Naive thymus-derived CD8-positive, alpha-beta T cell (primary cell): ENCODE measurements at regions of chr17 and their contacts with region 1.

Region 1: GRCh38 chr17:76014184-76014924 is 12.8 kb downstream of the EVPL start:
- DNase-seq: peak; percentile 67 to 88 (median 79)
- ATAC-seq: peak; percentile 99 to 100
- H3K4me3 Mint-ChIP-seq: peak overlapping the region in 9 of 10 donors; percentile 33 to 80 (median 57)
- H3K27ac Mint-ChIP-seq: peak overlapping the region; percentile 48 to 94 (median 76)
- H3K4me1 Mint-ChIP-seq: peaks cover 5 to 22% (median 18%) of the 10 kb centered on the region in 4 donors
- H3K27me3 Mint-ChIP-seq: no peaks in the 10 kb centered on the region

Region 2: GRCh38 chr17:76027159-76027839 is 12.9 kb after region 1 on chr17 and contains the start of gene EVPL:
- POLR2A ChIA-PET with region 1: interaction called, 61 read pairs
- DNase-seq: no peak
- ATAC-seq: no peak
- H3K4me3 Mint-ChIP-seq: peak within 1 kb of the TSS in 3 of 10 donors; percentile 50 to 93 (median 83)
- H3K27ac Mint-ChIP-seq: peak within 1 kb of the TSS; percentile 69 to 100 (median 100)
- H3K4me1 Mint-ChIP-seq: peaks cover 20 to 69% (median 43%) of the 10 kb centered on the region in 4 donors
- H3K27me3 Mint-ChIP-seq: no peaks in the 10 kb centered on the region
- polyA plus RNA-seq, gene EVPL: 0.74 to 1.6 TPM in 2 of 3 donors, not detected in the other

Region 3: GRCh38 chr17:76056835-76057234 is 42.5 kb after region 1 on chr17:
- POLR2A ChIA-PET with region 1: interaction called, 10 read pairs
- DNase-seq: peak in 1 of 10 donors; percentile 42
- ATAC-seq: peak; percentile 63 to 70
- H3K4me3 Mint-ChIP-seq: no peak overlapping the region
- H3K27ac Mint-ChIP-seq: peak overlapping the region in 1 of 10 donors; percentile 77
- H3K4me1 Mint-ChIP-seq: peaks cover 0 to 11% (median 4%) of the 10 kb centered on the region in 4 donors
- H3K27me3 Mint-ChIP-seq: no peaks in the 10 kb centered on the region

Region 4: GRCh38 chr17:76079956-76080767 is 65.8 kb after region 1 on chr17:
- POLR2A ChIA-PET with region 1: interaction called, 13 read pairs
- DNase-seq: no peak
- ATAC-seq: peak; percentile 17 to 24
- H3K4me3 Mint-ChIP-seq: peak overlapping the region in 2 of 10 donors; percentile 19 to 40
- H3K27ac Mint-ChIP-seq: peak overlapping the region; percentile 27 to 87 (median 68)
- H3K4me1 Mint-ChIP-seq: peaks cover 19 to 53% (median 46%) of the 10 kb centered on the region in 4 donors
- H3K27me3 Mint-ChIP-seq: peaks cover 4 to 20% (median 13%) of the 10 kb centered on the region in 5 donors

Region 5: GRCh38 chr17:76103274-76104139 is 89.2 kb after region 1 on chr17 and contains the start of gene EXOC7:
- POLR2A ChIA-PET with region 1: interaction called, 10 read pairs
- DNase-seq: peak; percentile 87 to 95 (median 92)
- ATAC-seq: peak; percentile 90 to 92
- H3K4me3 Mint-ChIP-seq: peak within 1 kb of the TSS; percentile 94 to 99 (median 97)
- H3K27ac Mint-ChIP-seq: peak within 1 kb of the TSS; percentile 95 to 99 (median 98)
- H3K4me1 Mint-ChIP-seq: peaks cover 6 to 39% (median 36%) of the 10 kb centered on the region in 4 donors
- H3K27me3 Mint-ChIP-seq: no peaks in the 10 kb centered on the region
- polyA plus RNA-seq, gene EXOC7: 46.0 to 62.6 (median 49.0) TPM

Region 6: DNA sequence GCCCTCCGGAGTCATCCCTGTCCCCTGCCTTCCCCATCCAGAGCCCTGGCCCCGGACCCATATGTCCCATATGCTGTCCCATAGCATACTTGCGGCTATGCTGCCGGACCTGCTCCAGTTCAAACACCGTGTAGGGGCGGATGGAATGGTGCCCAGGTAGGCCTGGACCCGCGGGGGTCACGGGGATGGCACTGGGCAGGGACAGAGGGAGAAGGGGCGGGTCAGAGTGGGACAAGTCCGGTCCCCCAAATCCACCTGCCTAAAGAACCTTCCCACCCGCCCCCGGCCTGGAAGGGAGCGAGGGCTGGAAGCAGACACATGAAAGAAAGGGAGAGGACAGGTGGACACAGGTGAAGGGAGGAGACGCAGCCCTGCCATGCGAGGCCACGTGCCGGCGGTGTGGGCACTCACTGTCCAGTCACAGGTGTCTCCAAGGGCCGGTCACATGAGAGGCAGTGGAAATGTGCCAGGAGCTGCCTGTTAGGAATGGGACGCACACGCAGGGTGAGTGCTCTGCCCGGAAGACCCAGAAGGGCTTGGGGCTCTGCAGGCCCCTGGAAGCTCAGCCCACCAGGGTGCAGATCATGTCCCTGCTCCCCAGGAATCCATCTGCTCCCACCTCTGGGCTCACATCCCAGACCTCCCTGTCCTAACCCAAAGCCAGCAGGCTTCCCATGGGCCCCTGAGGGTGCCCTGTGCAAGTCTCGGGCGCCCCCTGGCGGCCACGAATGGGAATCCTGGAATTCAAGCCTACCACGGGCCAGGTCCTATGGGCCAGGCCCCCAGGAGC is 264.8 kb after region 1 on chr17:
- POLR2A ChIA-PET with region 1: interaction called, 10 read pairs
- DNase-seq: peak; percentile 70 to 93 (median 83)
- ATAC-seq: peak; percentile 92
- H3K4me3 Mint-ChIP-seq: peak overlapping the region in 1 of 10 donors; percentile 20
- H3K27ac Mint-ChIP-seq: peak overlapping the region in 8 of 10 donors; percentile 20 to 86 (median 46)
- H3K4me1 Mint-ChIP-seq: peaks cover 16 to 38% (median 32%) of the 10 kb centered on the region in 4 donors
- H3K27me3 Mint-ChIP-seq: no peaks in the 10 kb centered on the region